ENCODE measurements at regions of chr2 and their contacts with region 1.

Region 1: DNA sequence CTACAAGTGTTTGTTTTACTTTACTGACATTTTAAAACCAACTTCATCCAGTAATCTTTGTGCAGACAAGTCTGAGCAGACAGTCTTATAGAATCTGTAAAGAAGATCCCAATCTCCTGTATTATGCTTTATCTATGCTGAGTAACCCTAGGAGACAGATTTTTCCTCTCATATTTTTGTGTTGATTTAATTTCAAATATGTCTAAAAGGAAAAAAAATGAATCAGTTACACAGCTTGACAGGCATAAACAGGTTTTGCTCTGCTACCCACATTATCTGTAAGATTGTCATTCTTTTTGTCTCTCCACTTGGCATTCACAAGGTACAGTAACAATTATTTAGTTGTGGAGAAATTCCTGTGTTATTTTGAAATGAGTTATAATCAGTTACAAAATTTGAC is 415.0 kb downstream of the NYAP2 start:
- DNase-seq: no peak
- H3K4me3 Mint-ChIP-seq: no peak overlapping the region
- H3K27ac Mint-ChIP-seq: no peak overlapping the region
- H3K4me1 Mint-ChIP-seq: no peaks in the 10 kb centered on the region
- H3K27me3 Mint-ChIP-seq: peaks cover 3% of the 10 kb centered on the region

Region 2: GRCh38 chr2:224585205-224586088 is 1229.1 kb before region 1 on chr2 and contains the start of gene CUL3:
- CTCF ChIA-PET with region 1: no interaction called
- intact Hi-C with region 1: no loop called
- DNase-seq: peak; percentile 100
- H3K4me3 Mint-ChIP-seq: peak within 1 kb of the TSS; percentile 92
- H3K27ac Mint-ChIP-seq: peak within 1 kb of the TSS; percentile 89
- H3K4me1 Mint-ChIP-seq: peaks cover 31% of the 10 kb centered on the region
- H3K27me3 Mint-ChIP-seq: no peaks in the 10 kb centered on the region
- total RNA-seq, gene CUL3: 61.7 to 66.0 TPM

Region 3: GRCh38 chr2:225740086-225740485 is 74.5 kb before region 1 on chr2:
- CTCF ChIA-PET with region 1: no interaction called
- intact Hi-C with region 1: no loop called
- DNase-seq: no peak
- H3K4me3 Mint-ChIP-seq: no peak overlapping the region
- H3K27ac Mint-ChIP-seq: no peak overlapping the region
- H3K4me1 Mint-ChIP-seq: no peaks in the 10 kb centered on the region
- H3K27me3 Mint-ChIP-seq: peaks cover 3% of the 10 kb centered on the region

Region 4: GRCh38 chr2:225779829-225780228 is 34.7 kb before region 1 on chr2:
- CTCF ChIA-PET with region 1: no interaction called
- intact Hi-C with region 1: loop called (anchors 1 kb)
- DNase-seq: no peak
- H3K4me3 Mint-ChIP-seq: no peak overlapping the region
- H3K27ac Mint-ChIP-seq: no peak overlapping the region
- H3K4me1 Mint-ChIP-seq: no peaks in the 10 kb centered on the region
- H3K27me3 Mint-ChIP-seq: peaks cover 7% of the 10 kb centered on the region

Measured in activated naive CD4-positive, alpha-beta T cell treated with anti-CD3 and anti-CD28 coated beads for 36 hours (primary cell).